ENCODE measurements at regions of chr1 and their contacts with region 1.

Region 1: GRCh38 chr1:207868774-207869721 is 41.9 kb downstream of the CD34 start:
- DNase-seq: peak; percentile 41
- ATAC-seq: peak; percentile 91
- H3K4me3 ChIP-seq: peak overlapping the region; percentile 61 to 83 (median 82)
- H3K27ac ChIP-seq: no peak overlapping the region
- H3K4me1 ChIP-seq: peaks cover 37% of the 10 kb centered on the region
- H3K27me3 ChIP-seq: peaks cover 0 to 17% of the 10 kb centered on the region in 2 experiments; a peak in 2 of 5 replicates
- CTCF ChIP-seq: peak; percentile 76
- EP300 ChIP-seq: peak in 1 of 2 experiments; percentile 35; a peak in 1 of 4 replicates
- POLR2A ChIP-seq: no peak
- RAD21 ChIP-seq: peak; percentile 88

Region 2: DNA sequence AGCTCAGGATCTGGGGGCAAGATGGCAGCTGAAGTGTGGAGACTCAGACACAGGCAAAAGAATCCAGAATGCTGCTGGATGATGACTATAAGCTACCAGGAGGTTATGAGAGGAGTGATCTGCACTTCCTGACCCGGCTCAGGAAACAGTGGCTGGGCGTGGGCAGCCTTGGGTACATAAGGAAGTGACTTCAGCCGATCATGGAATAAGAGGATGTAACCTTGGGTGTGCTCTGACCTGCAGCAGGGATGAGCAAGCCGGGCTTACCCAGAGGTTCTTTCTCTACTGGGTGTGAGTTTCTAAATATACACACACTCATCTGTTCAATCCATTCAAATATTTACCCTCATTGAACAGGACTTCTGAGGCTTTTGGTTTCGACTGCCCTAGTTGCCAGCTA is 20.8 kb before region 1 on chr1:
- CTCF ChIA-PET with region 1: no interaction called
- POLR2A ChIA-PET with region 1: no interaction called
- in situ Hi-C with region 1: no loop called
- intact Hi-C with region 1: loop called (anchors 2 kb)
- DNase-seq: peak; percentile 76
- ATAC-seq: peak; percentile 96
- H3K4me3 ChIP-seq: no peak overlapping the region
- H3K27ac ChIP-seq: peak overlapping the region; percentile 11
- H3K4me1 ChIP-seq: peaks cover 16% of the 10 kb centered on the region
- H3K27me3 ChIP-seq: no peaks in the 10 kb centered on the region
- CTCF ChIP-seq: no peak
- EP300 ChIP-seq: no peak
- POLR2A ChIP-seq: no peak
- RAD21 ChIP-seq: no peak